Activated B cell treated with CpG ODN at 0.5 μM for 24 hours (primary cell): ENCODE measurements at regions of chr20 and their contacts with region 1.

Region 1: DNA sequence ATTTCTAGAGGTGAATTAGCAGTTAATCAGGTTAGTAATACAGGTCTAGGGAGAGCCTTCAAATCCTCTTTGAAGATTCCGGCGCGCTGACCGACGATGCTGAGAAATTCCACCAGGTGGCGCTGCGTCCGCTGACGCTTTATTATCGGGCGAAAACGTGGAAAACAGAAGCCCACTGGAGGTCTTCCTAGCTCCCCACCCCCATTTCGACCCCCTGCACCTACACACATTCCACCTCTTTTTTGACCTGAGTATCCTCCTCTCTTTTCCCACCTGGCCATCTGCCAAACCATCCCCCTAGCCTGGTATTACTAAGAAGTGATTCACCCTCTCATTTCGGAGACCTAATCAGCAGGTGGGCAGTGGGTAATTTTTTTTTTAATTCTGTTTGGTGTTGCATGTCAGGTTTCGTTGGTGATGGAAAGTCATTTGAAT is 65.4 kb upstream of the RIN2 start:
- DNase-seq: peak; percentile 64
- ATAC-seq: peak; percentile 71
- H3K4me3 Mint-ChIP-seq: peak overlapping the region; percentile 49
- H3K27ac Mint-ChIP-seq: peak overlapping the region; percentile 76
- H3K4me1 Mint-ChIP-seq: peaks cover 11% of the 10 kb centered on the region
- H3K27me3 Mint-ChIP-seq: peaks cover 7% of the 10 kb centered on the region
- CTCF ChIP-seq: peak; percentile 76

Region 2: GRCh38 chr20:19317237-19318069 is 375.2 kb before region 1 on chr20:
- CTCF ChIA-PET with region 1: no interaction called
- POLR2A ChIA-PET with region 1: no interaction called
- intact Hi-C with region 1: no loop called
- DNase-seq: no peak
- ATAC-seq: no peak
- H3K4me3 Mint-ChIP-seq: no peak overlapping the region
- H3K27ac Mint-ChIP-seq: no peak overlapping the region
- H3K4me1 Mint-ChIP-seq: no peaks in the 10 kb centered on the region
- H3K27me3 Mint-ChIP-seq: peaks cover 12% of the 10 kb centered on the region
- CTCF ChIP-seq: no peak

Region 3: GRCh38 chr20:19661717-19662636 is 30.7 kb before region 1 on chr20:
- CTCF ChIA-PET with region 1: no interaction called
- POLR2A ChIA-PET with region 1: no interaction called
- intact Hi-C with region 1: loop called (anchors 1 kb)
- DNase-seq: peak; percentile 28
- ATAC-seq: peak; percentile 38
- H3K4me3 Mint-ChIP-seq: no peak overlapping the region
- H3K27ac Mint-ChIP-seq: no peak overlapping the region
- H3K4me1 Mint-ChIP-seq: peaks cover 32% of the 10 kb centered on the region
- H3K27me3 Mint-ChIP-seq: peaks cover 21% of the 10 kb centered on the region
- CTCF ChIP-seq: peak; percentile 99

Region 4: GRCh38 chr20:19735446-19735845 is 42.7 kb after region 1 on chr20:
- CTCF ChIA-PET with region 1: no interaction called
- POLR2A ChIA-PET with region 1: no interaction called
- intact Hi-C with region 1: loop called (anchors 2 kb)
- DNase-seq: no peak
- ATAC-seq: peak; percentile 95
- H3K4me3 Mint-ChIP-seq: no peak overlapping the region
- H3K27ac Mint-ChIP-seq: no peak overlapping the region
- H3K4me1 Mint-ChIP-seq: peaks cover 12% of the 10 kb centered on the region
- H3K27me3 Mint-ChIP-seq: peaks cover 6% of the 10 kb centered on the region
- CTCF ChIP-seq: no peak

Region 5: DNA sequence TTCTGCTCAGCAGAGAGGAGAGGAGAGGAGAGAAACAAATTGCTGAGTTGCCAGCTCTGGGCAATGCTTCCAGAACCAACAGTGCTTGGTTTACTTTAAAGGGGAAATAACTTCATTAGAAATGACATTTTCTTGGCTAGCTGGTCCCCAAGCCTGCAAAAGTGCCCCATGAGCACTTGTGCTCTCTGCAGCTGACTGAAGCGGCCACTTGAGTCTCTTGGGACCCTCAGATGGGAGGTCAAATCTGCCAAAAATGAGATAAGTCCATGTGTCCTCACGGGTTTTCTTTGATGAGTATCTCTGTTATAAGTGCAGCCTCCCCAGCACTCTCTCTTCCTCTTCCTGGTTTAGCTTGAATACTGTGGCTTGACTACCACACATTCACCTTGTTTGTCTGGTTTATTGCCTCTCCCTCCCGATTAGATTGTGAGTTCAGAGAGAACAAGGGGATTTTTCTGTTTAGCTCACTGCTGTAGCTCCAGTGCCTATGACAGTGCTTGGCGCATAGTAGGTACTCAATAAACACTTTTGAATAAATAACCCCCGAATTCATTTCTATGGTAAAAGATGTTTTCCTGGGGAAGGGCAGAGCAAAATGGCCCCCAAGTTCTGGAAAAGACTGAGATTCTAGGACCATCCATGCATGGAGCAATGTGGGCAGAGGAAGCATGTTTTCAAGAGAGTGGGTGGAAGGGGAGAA is 58.4 kb after region 1 on chr20:
- CTCF ChIA-PET with region 1: no interaction called
- POLR2A ChIA-PET with region 1: no interaction called
- intact Hi-C with region 1: no loop called
- DNase-seq: no peak
- ATAC-seq: peak; percentile 50
- H3K4me3 Mint-ChIP-seq: no peak overlapping the region
- H3K27ac Mint-ChIP-seq: no peak overlapping the region
- H3K4me1 Mint-ChIP-seq: peaks cover 10% of the 10 kb centered on the region
- H3K27me3 Mint-ChIP-seq: peaks cover 14% of the 10 kb centered on the region
- CTCF ChIP-seq: no peak

Region 6: DNA sequence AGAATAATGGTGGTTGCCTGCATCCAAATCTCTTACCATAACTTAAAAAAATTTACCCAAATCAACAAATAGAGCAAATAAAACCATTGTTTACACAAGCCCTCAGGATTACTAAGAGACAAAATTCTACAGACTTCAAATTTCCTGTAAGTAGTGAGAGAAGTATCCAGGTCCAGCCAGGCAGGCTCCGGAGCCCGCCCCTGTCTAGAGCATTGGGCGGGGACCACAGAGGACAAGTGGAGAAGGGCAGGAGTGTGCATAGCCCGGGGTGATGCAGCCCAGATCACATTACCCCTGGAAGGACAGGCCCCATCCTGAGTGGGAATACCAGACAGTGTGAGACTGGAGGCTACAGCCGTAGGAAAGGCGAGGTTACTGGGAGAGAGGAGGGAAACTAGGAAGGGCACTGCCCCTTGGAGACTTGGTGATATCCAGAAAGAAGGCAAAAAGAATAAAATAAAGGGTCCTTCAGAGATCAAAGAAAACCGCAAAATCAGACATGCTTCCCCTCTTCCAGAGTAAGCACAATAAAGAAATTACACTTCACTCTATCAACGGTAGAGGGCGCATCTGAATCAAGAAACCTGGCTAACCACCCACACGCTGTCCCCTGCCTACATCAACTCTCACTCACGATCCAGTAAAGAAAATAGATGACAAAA is 91.9 kb after region 1 on chr20:
- CTCF ChIA-PET with region 1: interaction called, 5 read pairs
- POLR2A ChIA-PET with region 1: no interaction called
- intact Hi-C with region 1: loop called (anchors 1 kb)
- DNase-seq: no peak
- ATAC-seq: peak; percentile 71
- H3K4me3 Mint-ChIP-seq: no peak overlapping the region
- H3K27ac Mint-ChIP-seq: no peak overlapping the region
- H3K4me1 Mint-ChIP-seq: peaks cover 22% of the 10 kb centered on the region
- H3K27me3 Mint-ChIP-seq: no peaks in the 10 kb centered on the region
- CTCF ChIP-seq: no peak

Region 7: GRCh38 chr20:19828232-19828631 is 135.5 kb after region 1 on chr20:
- CTCF ChIA-PET with region 1: interaction called, 19 read pairs
- POLR2A ChIA-PET with region 1: no interaction called
- intact Hi-C with region 1: loop called (anchors 1 kb)
- DNase-seq: no peak
- ATAC-seq: peak; percentile 96
- H3K4me3 Mint-ChIP-seq: peak overlapping the region; percentile 6
- H3K27ac Mint-ChIP-seq: peak overlapping the region; percentile 56
- H3K4me1 Mint-ChIP-seq: peaks cover 58% of the 10 kb centered on the region
- H3K27me3 Mint-ChIP-seq: no peaks in the 10 kb centered on the region
- CTCF ChIP-seq: no peak

Region 8: DNA sequence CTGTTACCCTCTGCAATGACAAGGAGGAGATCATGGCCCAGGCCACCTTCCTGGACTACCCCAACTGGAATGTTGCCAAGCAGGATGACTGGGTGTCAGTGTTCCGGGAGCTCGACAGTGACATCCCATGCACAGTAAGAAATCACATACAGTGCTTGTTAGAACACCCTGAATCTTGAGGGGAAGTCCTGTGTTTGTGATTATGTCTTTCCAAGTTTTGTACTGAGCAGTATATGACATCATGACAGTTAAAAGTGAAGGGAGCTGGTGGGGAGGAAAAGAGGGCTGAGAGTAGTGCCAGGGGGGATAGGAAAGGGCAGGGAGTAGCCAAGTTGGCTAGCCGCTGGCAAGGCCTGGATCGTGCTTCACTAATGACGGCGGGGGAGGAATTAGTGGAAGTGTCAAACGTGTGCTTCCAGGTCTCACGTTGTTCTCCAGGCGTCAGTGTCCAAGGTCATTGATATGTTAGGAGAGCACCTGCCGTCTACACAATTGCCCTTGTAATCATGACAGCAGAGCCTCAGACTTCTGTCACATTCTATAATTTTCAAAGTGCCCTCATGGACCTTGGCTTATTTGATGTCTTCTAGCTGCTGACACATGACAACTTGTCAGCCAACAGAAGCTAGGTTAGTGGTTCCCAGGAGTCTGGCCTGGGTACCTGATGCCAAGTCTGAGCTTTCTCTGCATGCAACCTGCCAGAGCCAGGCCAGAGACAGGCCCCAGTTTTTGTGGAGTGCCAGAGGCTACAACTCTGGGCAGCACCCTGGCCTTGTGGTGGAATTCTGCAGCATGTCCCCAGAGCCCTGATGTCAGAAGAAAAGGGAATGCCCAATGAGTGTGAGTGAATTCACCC is 378.4 kb after region 1 on chr20:
- CTCF ChIA-PET with region 1: no interaction called
- POLR2A ChIA-PET with region 1: no interaction called
- intact Hi-C with region 1: no loop called
- DNase-seq: no peak
- ATAC-seq: no peak
- H3K4me3 Mint-ChIP-seq: no peak overlapping the region
- H3K27ac Mint-ChIP-seq: no peak overlapping the region
- H3K4me1 Mint-ChIP-seq: no peaks in the 10 kb centered on the region
- H3K27me3 Mint-ChIP-seq: peaks cover 12% of the 10 kb centered on the region
- CTCF ChIP-seq: no peak